Activated naive CD4-positive, alpha-beta T cell treated with anti-CD3 and anti-CD28 coated beads for 36 hours (primary cell): ENCODE measurements at regions of chr10 and their contacts with region 1.

Region 1: DNA sequence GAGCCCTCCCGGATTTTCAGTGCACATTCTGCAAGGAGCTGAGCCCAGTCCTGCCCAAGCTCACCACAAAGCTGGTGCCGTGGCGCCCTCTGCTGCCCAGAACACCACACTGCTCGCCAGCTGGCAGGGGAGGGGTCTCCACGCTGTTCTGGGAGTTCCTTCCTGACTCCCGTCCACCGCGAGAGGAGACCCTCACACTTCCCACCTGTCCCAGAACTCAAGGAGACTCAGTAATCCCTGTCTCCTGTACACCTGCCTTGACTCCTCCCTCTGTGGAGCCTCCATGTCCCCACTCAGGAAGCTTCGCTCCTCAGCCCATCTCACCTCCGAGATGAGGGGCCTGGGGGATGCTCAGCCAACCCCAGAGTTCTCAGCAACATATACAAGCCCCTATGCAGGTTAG is 11.3 kb downstream of the C10orf105 start:
- DNase-seq: peak; percentile 81
- H3K4me3 Mint-ChIP-seq: no peak overlapping the region
- H3K27ac Mint-ChIP-seq: no peak overlapping the region
- H3K4me1 Mint-ChIP-seq: peaks cover 36% of the 10 kb centered on the region
- H3K27me3 Mint-ChIP-seq: no peaks in the 10 kb centered on the region

Region 2: GRCh38 chr10:71319042-71319799 is 389.1 kb before region 1 on chr10 and contains the start of gene SLC29A3:
- CTCF ChIA-PET with region 1: interaction called, 9 read pairs
- intact Hi-C with region 1: loop called (anchors 1 kb)
- DNase-seq: peak; percentile 92
- H3K4me3 Mint-ChIP-seq: peak within 1 kb of the TSS; percentile 93
- H3K27ac Mint-ChIP-seq: peak within 1 kb of the TSS; percentile 18
- H3K4me1 Mint-ChIP-seq: peaks cover 35% of the 10 kb centered on the region
- H3K27me3 Mint-ChIP-seq: no peaks in the 10 kb centered on the region
- total RNA-seq, gene SLC29A3: 1.2 to 1.5 TPM

Region 3: DNA sequence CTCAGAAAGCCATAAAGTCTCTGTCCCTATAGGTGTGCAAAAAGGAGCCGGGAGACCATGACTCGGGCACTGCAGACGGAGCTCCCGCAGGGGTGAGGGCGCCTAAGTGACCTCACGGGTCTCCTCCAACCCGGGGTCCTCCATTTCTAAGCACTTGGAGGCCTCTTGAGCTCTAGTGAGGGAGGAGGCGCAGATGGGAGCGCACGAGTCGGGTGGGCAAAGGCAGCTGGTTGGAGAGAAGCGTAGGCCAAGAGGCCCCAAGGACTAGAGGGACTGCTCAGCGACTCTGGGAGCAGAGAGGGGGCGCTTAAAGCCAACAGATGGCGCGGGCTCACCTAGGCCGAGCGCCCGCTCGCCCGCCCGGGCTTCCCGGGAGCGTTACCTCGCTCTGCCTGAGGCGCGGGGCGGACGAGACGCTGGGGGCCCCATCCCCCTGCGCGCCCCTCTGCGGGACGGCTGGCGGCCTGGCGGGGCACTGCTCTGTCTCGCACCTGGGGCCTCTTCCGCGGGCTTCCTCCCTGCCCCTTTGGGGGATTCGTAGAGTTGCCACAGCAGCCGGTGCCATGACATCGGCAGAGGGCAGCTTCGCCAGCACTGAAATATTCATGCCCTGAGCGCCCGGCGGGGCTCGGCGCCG is 312.1 kb before region 1 on chr10:
- CTCF ChIA-PET with region 1: interaction called, 9 read pairs
- intact Hi-C with region 1: loop called (anchors 1 kb)
- DNase-seq: peak; percentile 62
- H3K4me3 Mint-ChIP-seq: peak overlapping the region; percentile 45
- H3K27ac Mint-ChIP-seq: no peak overlapping the region
- H3K4me1 Mint-ChIP-seq: peaks cover 2% of the 10 kb centered on the region
- H3K27me3 Mint-ChIP-seq: peaks cover 58% of the 10 kb centered on the region

Region 4: DNA sequence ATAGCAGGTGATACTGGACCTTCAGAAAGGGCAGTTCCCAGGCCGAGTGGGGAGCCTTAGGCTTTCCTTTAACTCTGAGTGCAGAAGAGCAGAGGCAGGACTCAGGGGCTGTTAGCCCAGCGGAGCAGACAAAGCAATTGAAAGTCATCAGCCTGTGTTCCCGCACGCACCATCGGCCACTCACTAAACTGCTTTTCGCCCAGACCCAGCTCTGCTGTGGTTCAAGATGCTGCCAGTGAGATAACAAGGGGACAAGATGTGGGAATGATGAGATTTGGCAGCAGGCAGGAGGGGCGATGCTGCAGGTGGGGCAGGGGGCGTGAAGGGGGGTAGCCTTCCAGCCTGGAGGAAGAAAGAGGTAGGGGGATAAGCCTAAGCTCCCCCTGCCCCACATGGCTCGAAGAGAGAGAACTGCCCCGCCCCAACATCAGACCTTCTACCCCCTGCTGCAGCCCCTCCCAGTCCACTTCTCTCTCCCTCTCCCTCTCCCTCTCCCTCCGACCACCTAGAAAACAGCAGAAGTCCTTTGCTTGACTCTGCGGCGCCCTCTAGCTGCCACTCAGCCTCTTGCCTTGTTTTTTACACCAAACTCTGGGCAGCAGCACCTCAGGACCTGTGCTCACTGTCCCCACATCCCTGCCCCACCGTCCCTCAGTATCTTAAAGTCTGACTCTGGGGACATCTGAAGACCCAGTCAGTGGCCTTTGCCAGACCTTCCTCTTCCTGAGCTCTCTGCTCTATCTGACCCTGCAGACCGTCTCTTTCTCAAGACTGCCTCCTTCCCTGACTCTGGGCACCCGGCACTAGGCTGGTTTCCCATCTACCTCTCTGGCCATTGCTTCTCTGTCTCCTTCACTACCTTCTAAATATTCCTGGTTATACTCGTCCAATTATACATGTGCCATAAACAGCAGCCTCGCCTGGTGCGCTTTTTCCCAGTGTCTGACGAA is 99.2 kb before region 1 on chr10:
- CTCF ChIA-PET with region 1: interaction called, 22 read pairs
- intact Hi-C with region 1: loop called (anchors 5 kb)
- DNase-seq: peak; percentile 84
- H3K4me3 Mint-ChIP-seq: no peak overlapping the region
- H3K27ac Mint-ChIP-seq: no peak overlapping the region
- H3K4me1 Mint-ChIP-seq: no peaks in the 10 kb centered on the region
- H3K27me3 Mint-ChIP-seq: no peaks in the 10 kb centered on the region

Region 5: GRCh38 chr10:71727738-71728737 is 19.7 kb after region 1 on chr10:
- CTCF ChIA-PET with region 1: interaction called, 15 read pairs
- intact Hi-C with region 1: loop called (anchors 1 kb)
- DNase-seq: peak; percentile 87
- H3K4me3 Mint-ChIP-seq: peak overlapping the region; percentile 64
- H3K27ac Mint-ChIP-seq: peak overlapping the region; percentile 98
- H3K4me1 Mint-ChIP-seq: peaks cover 90% of the 10 kb centered on the region
- H3K27me3 Mint-ChIP-seq: no peaks in the 10 kb centered on the region

Region 6: GRCh38 chr10:71812016-71812912 is 104.0 kb after region 1 on chr10:
- CTCF ChIA-PET with region 1: interaction called, 21 read pairs
- intact Hi-C with region 1: loop called (anchors 1 kb)
- DNase-seq: peak; percentile 83
- H3K4me3 Mint-ChIP-seq: no peak overlapping the region
- H3K27ac Mint-ChIP-seq: no peak overlapping the region
- H3K4me1 Mint-ChIP-seq: peaks cover 2% of the 10 kb centered on the region
- H3K27me3 Mint-ChIP-seq: no peaks in the 10 kb centered on the region